Activated B cell treated with CpG ODN at 0.5 μM for 24 hours (primary cell): ENCODE measurements at regions of chr15 and their contacts with region 1.

Region 1: DNA sequence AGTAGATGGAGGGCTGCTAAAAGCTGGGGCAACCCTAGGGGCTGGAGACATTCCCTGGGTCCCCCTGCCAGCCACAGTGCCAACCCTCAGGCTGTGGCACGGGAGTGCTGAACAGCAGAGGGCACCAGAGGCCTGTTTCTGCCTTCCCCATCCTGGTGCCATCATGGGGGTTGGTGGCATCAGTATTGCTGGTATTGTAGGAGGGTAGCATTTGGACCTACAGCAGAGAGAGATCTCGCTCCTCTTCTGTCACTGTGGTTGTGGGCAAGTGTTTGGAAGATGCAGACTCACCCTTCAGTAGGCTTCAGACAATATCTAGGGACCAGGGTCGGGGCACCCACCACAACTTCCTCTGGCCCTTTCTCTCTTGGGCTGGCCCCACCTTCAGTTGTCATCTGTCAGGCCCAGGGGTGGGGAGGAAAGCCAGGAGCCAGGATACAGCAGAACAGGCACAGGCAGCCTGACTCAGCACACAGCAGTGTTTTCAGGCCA is 123.5 kb downstream of the RPLP1 start:
- DNase-seq: peak; percentile 57
- ATAC-seq: peak; percentile 83
- H3K4me3 Mint-ChIP-seq: no peak overlapping the region
- H3K27ac Mint-ChIP-seq: no peak overlapping the region
- H3K4me1 Mint-ChIP-seq: peaks cover 14% of the 10 kb centered on the region
- H3K27me3 Mint-ChIP-seq: peaks cover 11% of the 10 kb centered on the region
- CTCF ChIP-seq: no peak

Region 2: GRCh38 chr15:69475769-69476358 is 100.2 kb before region 1 on chr15:
- CTCF ChIA-PET with region 1: no interaction called
- POLR2A ChIA-PET with region 1: no interaction called
- intact Hi-C with region 1: loop called (anchors 5 kb)
- DNase-seq: peak; percentile 65
- ATAC-seq: peak; percentile 88
- H3K4me3 Mint-ChIP-seq: no peak overlapping the region
- H3K27ac Mint-ChIP-seq: no peak overlapping the region
- H3K4me1 Mint-ChIP-seq: peaks cover 3% of the 10 kb centered on the region
- H3K27me3 Mint-ChIP-seq: peaks cover 6% of the 10 kb centered on the region
- CTCF ChIP-seq: no peak

Region 3: GRCh38 chr15:69976366-69976994 is 400.4 kb after region 1 on chr15:
- CTCF ChIA-PET with region 1: interaction called, 3 read pairs
- POLR2A ChIA-PET with region 1: no interaction called
- intact Hi-C with region 1: loop called (anchors 2 kb)
- DNase-seq: no peak
- ATAC-seq: no peak
- H3K4me3 Mint-ChIP-seq: no peak overlapping the region
- H3K27ac Mint-ChIP-seq: peak overlapping the region; percentile 25
- H3K4me1 Mint-ChIP-seq: peaks cover 28% of the 10 kb centered on the region
- H3K27me3 Mint-ChIP-seq: peaks cover 33% of the 10 kb centered on the region
- CTCF ChIP-seq: no peak

Region 4: GRCh38 chr15:70264014-70264582 is 688.0 kb after region 1 on chr15:
- CTCF ChIA-PET with region 1: no interaction called
- POLR2A ChIA-PET with region 1: no interaction called
- intact Hi-C with region 1: loop called (anchors 10 kb)
- DNase-seq: no peak
- ATAC-seq: peak; percentile 51
- H3K4me3 Mint-ChIP-seq: peak overlapping the region; percentile 57
- H3K27ac Mint-ChIP-seq: peak overlapping the region; percentile 18
- H3K4me1 Mint-ChIP-seq: peaks cover 92% of the 10 kb centered on the region
- H3K27me3 Mint-ChIP-seq: no peaks in the 10 kb centered on the region
- CTCF ChIP-seq: no peak

Region 5: GRCh38 chr15:70466895-70467529 is 890.9 kb after region 1 on chr15:
- CTCF ChIA-PET with region 1: interaction called, 18 read pairs
- POLR2A ChIA-PET with region 1: no interaction called
- intact Hi-C with region 1: loop called (anchors 1 kb)
- DNase-seq: no peak
- ATAC-seq: peak; percentile 73
- H3K4me3 Mint-ChIP-seq: no peak overlapping the region
- H3K27ac Mint-ChIP-seq: no peak overlapping the region
- H3K4me1 Mint-ChIP-seq: peaks cover 20% of the 10 kb centered on the region
- H3K27me3 Mint-ChIP-seq: peaks cover 3% of the 10 kb centered on the region
- CTCF ChIP-seq: peak; percentile 72

Region 6: DNA sequence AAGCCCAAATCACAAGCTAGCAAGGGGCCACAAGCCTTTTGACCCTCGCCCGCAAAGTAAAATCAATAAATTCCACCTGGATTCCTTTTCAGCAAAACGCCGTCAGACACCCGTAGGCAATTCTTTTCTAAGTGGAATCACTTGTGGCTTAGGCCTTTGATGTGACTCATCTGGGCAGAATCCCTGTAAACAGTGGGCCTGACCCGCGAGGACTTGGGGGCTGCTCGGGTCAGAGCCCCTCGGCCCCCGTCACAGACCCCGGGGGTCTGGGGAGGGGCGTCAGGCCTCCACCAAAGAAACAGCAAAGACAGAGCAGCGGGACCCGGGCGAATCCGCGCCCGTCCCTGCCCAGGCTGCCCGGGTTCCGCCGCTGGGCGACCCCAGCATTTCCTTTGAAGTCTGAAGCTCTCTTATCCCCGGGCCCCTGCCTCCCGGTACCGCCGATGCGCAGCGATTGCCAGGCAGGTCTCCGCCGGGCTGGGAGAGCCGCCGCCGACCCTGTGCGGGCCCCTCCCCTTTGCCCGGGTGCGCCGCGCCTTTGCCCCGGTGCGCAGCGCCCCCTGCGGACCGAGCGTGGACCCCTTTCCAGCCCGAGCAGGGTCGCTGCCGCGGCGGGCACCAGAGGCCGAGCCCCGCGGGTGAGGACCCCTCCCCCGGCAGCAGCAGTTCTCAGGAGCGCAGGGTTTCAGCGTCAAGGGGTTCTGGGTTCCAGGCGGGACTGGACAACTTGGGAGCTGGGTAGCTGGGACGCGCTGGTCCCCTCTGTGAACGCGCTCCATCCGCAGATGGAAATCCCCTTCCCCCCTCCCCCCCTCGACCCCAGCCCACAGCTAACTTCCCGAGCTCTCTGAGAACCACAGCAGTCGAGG is 1009.0 kb after region 1 on chr15:
- CTCF ChIA-PET with region 1: interaction called, 3 read pairs
- POLR2A ChIA-PET with region 1: no interaction called
- intact Hi-C with region 1: loop called (anchors 1 kb)
- DNase-seq: peak; percentile 28
- ATAC-seq: peak; percentile 40
- H3K4me3 Mint-ChIP-seq: no peak overlapping the region
- H3K27ac Mint-ChIP-seq: no peak overlapping the region
- H3K4me1 Mint-ChIP-seq: peaks cover 4% of the 10 kb centered on the region
- H3K27me3 Mint-ChIP-seq: peaks cover 43% of the 10 kb centered on the region
- CTCF ChIP-seq: no peak

Region 7: DNA sequence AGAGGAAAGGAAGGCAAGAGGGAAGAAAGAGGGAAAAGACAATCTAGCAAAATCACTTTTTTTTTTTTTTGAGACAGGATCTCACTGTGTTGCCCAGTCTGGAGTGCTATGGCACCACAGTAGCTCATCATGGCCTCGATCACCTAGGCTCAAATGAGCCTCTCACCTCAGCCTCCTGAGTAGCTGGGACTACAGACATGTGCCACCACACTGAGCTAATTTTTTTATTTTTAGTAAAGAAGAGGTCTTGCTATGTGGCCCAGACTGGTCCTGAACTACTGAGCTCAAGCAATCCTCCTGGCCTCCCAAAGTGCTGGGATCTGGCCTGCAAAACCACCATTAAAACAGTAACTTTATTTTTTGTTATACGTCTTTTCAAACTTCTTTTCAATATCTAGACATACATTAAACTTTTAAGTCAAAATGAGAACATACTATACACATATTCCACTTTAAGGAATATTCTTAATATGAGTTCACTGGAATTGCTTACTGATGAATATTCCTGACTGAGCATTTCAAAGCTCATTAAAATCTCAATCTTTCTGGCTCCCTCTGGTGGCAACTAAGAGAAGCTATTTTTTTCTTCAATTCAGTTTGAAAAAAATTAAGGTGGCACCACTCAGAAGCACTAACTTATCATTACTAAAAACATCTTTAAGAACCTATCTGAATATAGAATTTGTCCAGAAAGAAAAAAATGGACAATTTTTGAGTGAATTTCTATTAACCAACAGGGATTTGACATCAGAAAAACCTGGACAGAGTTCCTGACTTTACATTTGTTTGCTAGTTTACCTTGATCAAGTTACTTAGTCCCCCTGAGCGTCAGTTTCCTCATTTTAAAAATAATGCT is 1146.4 kb after region 1 on chr15:
- CTCF ChIA-PET with region 1: interaction called, 22 read pairs
- POLR2A ChIA-PET with region 1: no interaction called
- intact Hi-C with region 1: loop called (anchors 10 kb)
- DNase-seq: no peak
- ATAC-seq: no peak
- H3K4me3 Mint-ChIP-seq: no peak overlapping the region
- H3K27ac Mint-ChIP-seq: no peak overlapping the region
- H3K4me1 Mint-ChIP-seq: no peaks in the 10 kb centered on the region
- H3K27me3 Mint-ChIP-seq: peaks cover 9% of the 10 kb centered on the region
- CTCF ChIP-seq: peak; percentile 53